MCF 10A (cell line): ENCODE measurements at regions of chr3 and their contacts with region 1.

Region 1: GRCh38 chr3:190701096-190701532 is 161.4 kb downstream of the GMNC start:
- DNase-seq: peak; percentile 86
- H3K4me3 Mint-ChIP-seq: no peak overlapping the region
- H3K27ac Mint-ChIP-seq: no peak overlapping the region
- H3K4me1 Mint-ChIP-seq: peaks cover 14% of the 10 kb centered on the region
- H3K27me3 Mint-ChIP-seq: no peaks in the 10 kb centered on the region
- CTCF ChIP-seq: peak; percentile 75

Region 2: DNA sequence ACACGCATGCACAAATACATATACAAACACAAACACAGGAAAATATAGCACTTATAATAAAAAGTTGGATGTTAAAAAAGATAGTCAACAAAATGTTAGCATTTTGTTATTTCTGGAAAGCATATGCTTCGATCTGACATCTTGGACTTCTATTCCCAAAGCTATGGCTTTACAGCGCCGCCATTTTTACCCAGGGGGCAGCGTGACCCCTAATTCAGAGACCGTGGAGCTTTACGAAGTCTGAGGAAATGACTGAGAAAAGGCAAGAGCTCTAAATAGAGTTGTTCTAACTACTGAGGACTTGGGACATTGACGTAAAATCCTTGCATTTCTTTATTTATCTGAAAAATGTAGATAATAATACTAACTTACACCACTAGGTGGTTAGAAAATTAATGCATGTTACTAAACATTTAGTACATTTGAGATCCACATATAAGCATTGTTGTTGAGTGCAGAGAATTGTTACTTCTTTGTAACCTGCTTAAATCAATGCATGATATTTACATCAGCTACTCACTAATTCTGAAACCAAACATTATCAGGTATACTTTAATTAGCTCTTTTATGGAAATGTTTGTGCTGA is 914.5 kb before region 1 on chr3:
- CTCF ChIA-PET with region 1: no interaction called
- POLR2A ChIA-PET with region 1: no interaction called
- intact Hi-C with region 1: no loop called
- DNase-seq: no peak
- H3K4me3 Mint-ChIP-seq: no peak overlapping the region
- H3K27ac Mint-ChIP-seq: no peak overlapping the region
- H3K4me1 Mint-ChIP-seq: peaks cover 5% of the 10 kb centered on the region
- H3K27me3 Mint-ChIP-seq: no peaks in the 10 kb centered on the region
- CTCF ChIP-seq: peak; percentile 20

Region 3: DNA sequence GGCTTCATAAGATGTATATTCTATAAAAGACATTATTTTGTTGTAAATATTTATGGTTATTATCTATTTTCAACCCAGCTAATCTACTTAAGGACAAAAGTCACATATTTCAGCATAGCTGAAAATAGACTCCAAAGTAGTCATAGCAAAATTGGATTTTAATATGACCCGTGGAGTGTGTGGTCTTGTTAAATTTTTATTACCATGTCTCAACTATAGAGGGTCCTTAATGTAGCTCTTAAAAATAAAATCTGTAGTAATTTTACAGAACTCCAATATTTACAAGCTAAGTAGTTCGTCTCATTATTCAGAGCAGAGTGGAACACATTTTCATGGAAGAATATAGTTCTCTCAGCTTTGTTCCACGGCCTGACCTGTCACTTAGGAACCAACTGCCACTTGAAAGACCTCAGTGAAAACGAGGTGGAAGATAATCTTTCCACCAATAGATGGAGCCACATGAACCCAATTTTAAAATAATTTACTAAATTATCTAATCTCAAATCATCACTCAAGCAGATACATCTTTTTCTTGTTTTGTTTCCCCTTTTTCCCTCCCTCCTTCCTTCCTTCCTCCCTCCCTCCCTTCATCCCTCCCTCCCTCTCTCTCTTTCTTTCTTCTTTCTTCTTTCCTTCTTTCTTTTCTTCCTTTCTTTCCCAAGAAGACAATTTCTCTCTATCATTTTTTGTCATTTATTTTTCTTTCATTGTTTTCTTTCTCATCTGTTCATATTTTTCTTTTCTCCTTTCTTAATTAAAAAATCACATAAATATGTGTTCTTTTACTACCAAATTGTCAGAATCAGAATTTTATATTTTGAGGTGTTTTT is 476.0 kb before region 1 on chr3:
- CTCF ChIA-PET with region 1: interaction called, 16 read pairs
- POLR2A ChIA-PET with region 1: interaction called, 3 read pairs
- intact Hi-C with region 1: loop called (anchors 1 kb)
- DNase-seq: peak; percentile 57
- H3K4me3 Mint-ChIP-seq: no peak overlapping the region
- H3K27ac Mint-ChIP-seq: no peak overlapping the region
- H3K4me1 Mint-ChIP-seq: peaks cover 16% of the 10 kb centered on the region
- H3K27me3 Mint-ChIP-seq: no peaks in the 10 kb centered on the region
- CTCF ChIP-seq: peak; percentile 50

Region 4: DNA sequence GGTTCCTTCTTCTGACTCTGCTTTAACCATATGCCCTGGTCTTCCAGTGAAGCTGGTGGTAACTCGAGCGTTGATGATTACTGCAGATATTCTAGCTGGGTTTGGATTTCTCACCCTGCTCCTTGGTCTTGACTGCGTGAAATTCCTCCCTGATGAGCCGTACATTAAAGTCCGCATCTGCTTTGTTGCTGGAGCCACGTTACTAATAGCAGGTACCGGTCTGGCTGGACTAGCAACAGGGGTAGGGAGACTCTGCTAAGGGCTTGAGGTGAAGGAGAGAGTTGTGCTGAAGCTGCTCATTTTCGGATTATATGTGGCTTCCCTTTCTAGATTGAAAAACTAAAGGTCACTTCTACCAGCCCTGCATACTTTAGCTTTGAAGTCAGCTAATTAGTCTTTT is 296.4 kb before region 1 on chr3:
- CTCF ChIA-PET with region 1: no interaction called
- POLR2A ChIA-PET with region 1: no interaction called
- intact Hi-C with region 1: no loop called
- DNase-seq: no peak
- H3K4me3 Mint-ChIP-seq: no peak overlapping the region
- H3K27ac Mint-ChIP-seq: no peak overlapping the region
- H3K4me1 Mint-ChIP-seq: no peaks in the 10 kb centered on the region
- H3K27me3 Mint-ChIP-seq: no peaks in the 10 kb centered on the region
- CTCF ChIP-seq: no peak

Region 5: GRCh38 chr3:190481779-190482178 is 219.3 kb before region 1 on chr3:
- CTCF ChIA-PET with region 1: no interaction called
- POLR2A ChIA-PET with region 1: no interaction called
- intact Hi-C with region 1: no loop called
- DNase-seq: no peak
- H3K4me3 Mint-ChIP-seq: no peak overlapping the region
- H3K27ac Mint-ChIP-seq: no peak overlapping the region
- H3K4me1 Mint-ChIP-seq: no peaks in the 10 kb centered on the region
- H3K27me3 Mint-ChIP-seq: no peaks in the 10 kb centered on the region
- CTCF ChIP-seq: no peak

Region 6: DNA sequence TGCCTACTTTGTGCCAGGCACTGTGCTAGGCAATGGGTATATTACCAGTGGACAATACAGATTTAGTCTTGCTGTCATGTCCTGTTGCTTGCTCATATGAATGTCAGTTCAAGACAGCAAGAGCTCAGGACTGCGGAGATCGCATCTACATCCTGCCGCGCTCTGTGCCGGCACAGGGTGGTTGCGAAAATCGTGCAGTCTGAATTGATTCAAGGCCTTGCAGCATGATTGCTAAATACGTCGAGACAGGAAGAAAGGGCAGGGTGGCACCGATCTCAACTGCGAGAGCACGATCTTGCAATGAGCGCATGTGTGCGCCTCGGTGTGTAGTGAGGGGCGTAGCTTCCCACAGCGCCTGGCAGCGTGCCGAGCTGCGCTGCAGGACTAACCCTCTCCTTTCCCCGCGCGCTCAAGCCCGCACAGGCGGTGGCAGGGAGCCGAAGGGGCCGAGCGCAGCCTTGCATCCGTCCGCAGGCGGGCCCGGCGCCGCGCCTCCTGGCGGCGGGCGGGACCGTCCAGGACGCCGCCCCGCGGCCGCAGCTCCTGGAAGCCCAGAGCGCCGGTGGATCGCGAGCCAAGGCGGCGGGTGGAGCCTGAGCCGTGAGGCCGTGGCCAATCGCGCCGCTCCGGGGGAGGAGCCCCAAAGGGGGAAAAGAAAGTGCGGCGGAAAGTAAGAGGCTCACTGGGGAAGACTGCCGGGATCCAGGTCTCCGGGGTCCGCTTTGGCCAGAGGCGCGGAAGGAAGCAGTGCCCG is 187.5 kb before region 1 on chr3 and contains the start of gene IL1RAP:
- CTCF ChIA-PET with region 1: interaction called, 57 read pairs
- POLR2A ChIA-PET with region 1: interaction called, 40 read pairs
- intact Hi-C with region 1: loop called (anchors 1 kb)
- DNase-seq: peak; percentile 95
- H3K4me3 Mint-ChIP-seq: peak within 1 kb of the TSS; percentile 88
- H3K27ac Mint-ChIP-seq: peak within 1 kb of the TSS; percentile 78
- H3K4me1 Mint-ChIP-seq: peaks cover 36% of the 10 kb centered on the region
- H3K27me3 Mint-ChIP-seq: no peaks in the 10 kb centered on the region
- CTCF ChIP-seq: peak; percentile 38
- total RNA-seq, gene IL1RAP: 46.5 and 62.0 TPM in 2 replicates

Region 7: GRCh38 chr3:190767851-190768250 is 66.7 kb after region 1 on chr3:
- CTCF ChIA-PET with region 1: no interaction called
- POLR2A ChIA-PET with region 1: no interaction called
- intact Hi-C with region 1: no loop called
- DNase-seq: no peak
- H3K4me3 Mint-ChIP-seq: no peak overlapping the region
- H3K27ac Mint-ChIP-seq: no peak overlapping the region
- H3K4me1 Mint-ChIP-seq: no peaks in the 10 kb centered on the region
- H3K27me3 Mint-ChIP-seq: no peaks in the 10 kb centered on the region
- CTCF ChIP-seq: no peak

Region 8: DNA sequence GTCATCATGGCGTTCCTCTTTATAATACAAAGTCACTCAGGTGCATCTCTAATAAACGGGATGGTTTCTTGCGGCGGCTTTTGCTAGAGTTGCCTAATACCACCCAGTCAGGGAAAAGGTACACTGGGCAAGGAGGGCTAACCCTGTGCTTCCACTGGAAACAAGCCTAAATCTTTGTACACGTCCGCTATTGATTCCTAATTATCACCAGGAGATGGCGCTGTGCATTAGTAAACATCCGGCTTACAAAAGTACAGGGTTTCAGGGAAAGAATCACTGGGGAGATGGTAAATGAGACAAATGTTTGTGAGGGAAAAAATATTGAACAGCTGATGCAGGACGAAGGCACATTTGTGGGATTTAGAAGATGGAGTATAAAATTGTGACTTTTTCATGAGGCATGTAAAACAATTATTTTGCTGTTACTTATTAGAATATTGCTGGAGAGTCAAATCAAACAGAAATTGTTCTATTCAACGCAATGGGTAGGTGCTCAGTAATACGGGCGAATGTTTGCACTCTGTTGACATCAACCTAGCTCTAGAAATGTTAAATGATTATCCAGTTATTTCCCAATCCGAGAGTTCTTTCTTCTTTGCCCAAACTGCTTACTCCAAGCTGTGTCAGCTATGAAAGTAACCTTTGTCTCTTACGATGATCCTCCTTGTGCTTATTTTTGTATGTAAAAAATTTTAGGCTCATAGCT is 110.8 kb after region 1 on chr3:
- CTCF ChIA-PET with region 1: interaction called, 14 read pairs
- POLR2A ChIA-PET with region 1: no interaction called
- intact Hi-C with region 1: loop called (anchors 2 kb)
- DNase-seq: peak; percentile 84
- H3K4me3 Mint-ChIP-seq: peak overlapping the region; percentile 64
- H3K27ac Mint-ChIP-seq: peak overlapping the region; percentile 36
- H3K4me1 Mint-ChIP-seq: peaks cover 12% of the 10 kb centered on the region
- H3K27me3 Mint-ChIP-seq: no peaks in the 10 kb centered on the region
- CTCF ChIP-seq: peak; percentile 76

Region 9: GRCh38 chr3:191051037-191051436 is 349.9 kb after region 1 on chr3:
- CTCF ChIA-PET with region 1: interaction called, 159 read pairs
- POLR2A ChIA-PET with region 1: interaction called, 12 read pairs
- intact Hi-C with region 1: loop called (anchors 1 kb)
- DNase-seq: peak; percentile 41
- H3K4me3 Mint-ChIP-seq: no peak overlapping the region
- H3K27ac Mint-ChIP-seq: no peak overlapping the region
- H3K4me1 Mint-ChIP-seq: no peaks in the 10 kb centered on the region
- H3K27me3 Mint-ChIP-seq: no peaks in the 10 kb centered on the region
- CTCF ChIP-seq: peak; percentile 38